Posterior cingulate gyrus (tissue), 11 donors: ENCODE measurements at regions of chr19 and their contacts with region 1.

Region 1: DNA sequence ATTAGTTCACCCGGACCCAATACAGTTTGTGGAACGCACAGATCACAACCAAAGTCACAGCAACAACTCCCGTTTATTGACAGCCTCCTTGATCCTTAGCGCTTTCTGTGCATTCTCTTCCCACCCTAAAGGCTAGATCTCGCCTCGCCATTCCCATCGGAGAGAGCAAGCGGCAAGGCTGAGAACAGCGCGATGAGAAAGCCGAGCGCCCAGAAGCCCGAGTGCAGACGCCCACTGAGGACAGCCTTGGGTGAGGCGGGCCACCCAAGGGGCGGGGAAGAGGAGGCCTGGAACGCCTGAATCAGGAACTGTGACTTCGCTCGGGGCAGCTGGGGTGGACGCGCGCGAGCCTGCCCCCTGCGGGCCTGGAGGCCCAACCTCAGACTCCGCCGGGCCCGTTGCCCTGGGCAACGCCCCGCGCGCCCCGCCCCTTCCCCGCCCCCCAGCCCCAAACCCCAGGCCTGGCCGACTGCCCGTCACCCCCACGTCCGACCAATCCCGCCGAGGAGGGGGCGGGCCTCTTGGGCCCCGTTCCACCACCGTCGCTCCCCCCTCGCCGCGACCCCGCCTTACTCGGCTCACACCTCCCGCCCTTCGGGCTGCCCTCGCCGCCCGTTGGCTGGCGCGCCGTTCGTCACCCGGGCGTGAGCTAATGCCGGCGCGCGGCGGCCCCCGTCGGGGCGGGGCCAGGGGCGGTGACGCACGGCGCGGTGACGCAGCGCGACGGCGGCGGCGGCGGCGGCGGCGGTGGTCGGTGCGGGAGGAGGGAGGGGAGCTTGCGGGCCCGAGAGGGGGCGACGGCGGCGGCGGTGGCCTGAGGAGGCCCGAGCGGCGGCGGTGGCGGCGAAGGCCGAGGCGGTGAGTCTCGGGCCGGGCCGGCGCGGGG is at the start of gene SAMD4B:
- DNase-seq: peak; percentile 97 to 100 (median 98)

Region 2: DNA sequence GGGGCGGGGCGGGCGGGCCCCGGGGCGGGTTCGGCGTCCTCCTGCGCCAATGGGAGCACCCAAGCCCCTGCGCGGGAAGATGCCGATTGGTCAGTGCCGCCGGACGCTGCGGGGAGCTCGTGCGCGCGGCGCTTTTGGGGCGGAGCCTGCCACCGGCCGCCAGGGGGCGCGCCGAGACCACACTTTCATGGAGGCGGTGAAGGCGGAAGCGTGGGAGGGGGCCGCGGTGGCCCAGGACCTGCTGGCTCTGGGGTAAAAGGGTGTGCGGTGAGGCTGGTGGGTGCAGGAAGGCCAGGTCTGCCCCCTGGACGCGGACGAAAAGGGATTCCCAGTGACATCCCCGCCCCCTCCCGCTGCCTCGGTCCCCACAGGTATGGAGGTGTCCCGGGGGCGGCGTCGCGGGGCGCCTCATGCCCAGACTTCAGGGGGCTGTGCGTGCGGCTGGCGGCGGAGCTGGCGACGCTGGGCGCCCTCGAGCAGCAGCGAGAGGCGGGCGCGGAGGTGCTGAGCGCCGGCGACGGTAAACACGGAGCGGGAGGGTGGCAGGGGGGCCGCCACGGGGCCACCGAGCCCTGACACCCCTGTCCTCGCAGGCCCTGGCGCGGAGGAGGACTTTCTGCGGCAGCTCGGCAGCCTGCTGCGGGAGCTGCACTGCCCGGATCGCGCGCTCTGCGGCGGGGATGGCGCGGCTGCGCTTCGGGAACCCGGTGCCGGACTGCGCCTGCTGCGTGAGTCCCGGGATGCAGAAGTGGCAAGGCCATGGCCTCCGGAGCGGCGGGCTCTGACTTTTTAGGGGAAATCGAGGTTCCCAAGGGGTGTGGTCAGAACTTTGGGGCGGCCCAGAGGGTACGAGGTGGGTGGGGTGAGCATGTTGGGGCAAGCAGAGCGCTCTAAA is 938.7 kb before region 1 on chr19 and contains the start of gene FAM98C:
- intact Hi-C with region 1: loop called (anchors 10 kb)
- DNase-seq: peak; percentile 92 to 99 (median 96)

Region 3: DNA sequence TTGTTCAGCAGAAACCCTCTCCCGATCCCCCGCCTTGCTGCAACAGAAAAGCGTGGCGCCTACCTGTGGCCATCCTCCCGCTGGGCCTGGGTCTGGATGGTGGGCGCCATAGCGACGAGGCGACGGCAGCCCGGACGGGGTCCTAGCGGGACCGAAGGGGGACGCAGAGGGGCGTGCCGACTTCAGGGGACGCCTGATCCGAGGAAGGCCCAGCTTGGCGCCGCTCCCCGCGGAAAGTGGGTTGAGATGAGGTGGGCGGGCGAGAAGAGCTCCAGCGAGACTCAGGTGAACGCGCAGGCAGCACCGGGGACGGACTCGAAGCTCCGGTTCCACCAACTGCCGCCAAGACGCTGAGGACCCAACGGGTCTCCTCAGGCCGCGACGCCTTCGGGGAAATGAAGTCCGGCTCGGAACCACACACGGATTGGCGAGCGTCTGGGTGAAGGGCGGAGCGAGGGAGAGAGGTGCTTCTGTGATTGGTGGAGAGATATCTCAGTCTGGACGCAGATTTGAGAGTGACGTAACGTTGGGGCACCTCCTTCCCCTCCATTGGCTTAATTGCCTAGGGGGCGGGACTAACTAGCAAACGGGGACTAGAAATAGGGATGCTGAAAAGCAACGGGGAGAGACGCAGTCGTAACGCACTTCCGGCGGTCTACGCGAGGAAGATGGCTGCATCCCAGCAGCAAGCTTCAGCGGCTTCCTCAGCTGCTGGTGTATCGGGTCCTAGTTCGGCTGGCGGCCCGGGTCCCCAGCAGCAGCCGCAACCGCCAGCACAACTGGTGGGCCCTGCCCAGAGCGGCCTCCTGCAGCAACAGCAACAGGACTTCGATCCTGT is 49.0 kb after region 1 on chr19 and contains the starts of genes MED29 and PAF1:
- intact Hi-C with region 1: loop called (anchors 1 kb)
- DNase-seq: peak; percentile 93 to 100 (median 98)

Region 4: DNA sequence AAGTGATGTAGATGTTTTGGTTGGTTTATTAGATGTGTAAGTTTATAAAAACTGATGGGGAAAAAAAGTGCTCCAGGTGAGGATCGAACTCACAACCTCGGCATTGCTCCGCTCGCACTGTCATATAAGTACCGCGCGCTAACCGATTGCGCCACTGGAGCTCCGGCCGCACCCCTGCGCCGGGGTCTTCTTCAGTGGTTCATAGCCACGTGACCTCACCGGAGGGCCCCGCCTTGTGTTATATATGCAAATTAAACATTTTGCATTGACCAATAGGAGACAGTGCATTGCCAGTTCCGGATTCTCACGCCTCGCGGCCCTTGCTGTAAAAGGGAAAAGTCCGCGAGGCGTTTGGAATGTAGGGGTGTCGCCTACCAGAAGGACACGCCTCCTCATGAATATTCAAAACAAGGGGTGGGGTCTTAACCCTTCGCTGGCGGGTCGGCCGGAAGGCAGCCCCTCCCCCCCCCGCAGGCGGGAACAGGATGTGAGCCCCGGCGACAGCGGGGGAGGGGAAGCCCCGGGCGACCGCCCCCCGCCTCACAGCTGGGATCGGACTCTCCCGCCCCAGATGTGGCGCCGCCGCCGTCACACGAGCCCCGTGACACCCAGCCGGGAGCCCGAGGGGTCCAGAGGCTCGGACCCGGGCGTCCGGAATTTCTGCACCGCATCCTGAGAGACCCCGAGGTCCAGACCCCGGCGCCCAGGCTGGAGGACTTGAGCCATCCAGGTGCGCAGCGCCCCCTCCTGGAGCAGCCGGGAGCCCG is 70.3 kb after region 1 on chr19 and contains the start of gene PLEKHG2:
- intact Hi-C with region 1: loop called (anchors 5 kb)
- DNase-seq: peak; percentile 85 to 99 (median 94)

Region 5: GRCh38 chr19:39645800-39646411 is 303.9 kb after region 1 on chr19:
- intact Hi-C with region 1: no loop called
- DNase-seq: no peak